ENCODE measurements at regions of chr12 and their contacts with region 1.

Region 1: DNA sequence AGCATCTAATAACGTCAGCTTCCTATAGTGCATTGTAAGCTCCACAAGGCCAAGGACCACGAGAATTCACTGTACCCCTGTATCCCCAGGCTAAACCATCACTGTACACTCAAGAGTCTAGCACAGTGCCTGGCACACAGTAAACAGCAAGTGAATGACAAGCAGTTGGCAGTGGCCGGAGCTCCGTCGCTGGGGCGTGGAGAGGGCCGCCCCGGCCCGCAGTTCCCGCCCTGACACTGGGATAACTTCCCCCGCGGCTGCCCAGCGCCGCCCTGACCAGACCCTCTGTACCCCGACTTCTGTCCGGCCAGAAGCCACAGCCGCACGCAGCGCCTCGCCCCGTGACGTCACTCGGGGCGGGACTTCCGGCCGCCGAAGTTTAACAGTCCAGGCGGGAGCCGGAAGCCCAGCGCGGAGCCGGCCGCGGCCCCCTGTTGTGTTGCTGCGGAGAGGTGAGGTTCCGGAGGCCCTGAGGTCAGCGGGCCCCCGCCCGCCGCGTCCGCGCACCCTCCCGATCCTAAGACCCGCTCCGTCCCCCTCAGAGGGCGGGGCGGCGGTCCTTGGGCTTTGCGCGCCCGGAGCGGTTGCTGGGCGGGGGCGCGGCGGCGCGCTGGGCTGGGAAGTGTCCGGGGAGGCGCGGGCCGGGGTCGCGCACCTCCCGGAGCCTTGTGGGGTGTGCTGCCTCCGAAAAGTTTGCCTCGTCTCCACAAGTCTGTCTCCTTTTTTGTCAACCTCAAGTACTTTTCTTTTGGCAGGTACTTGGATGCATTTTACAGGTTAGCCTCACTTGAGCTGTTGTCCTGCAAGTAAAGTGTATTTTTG is at the start of gene NEDD1:
- DNase-seq: peak; percentile 60 to 83
- H3K4me3 ChIP-seq: peak within 1 kb of the TSS; percentile 91
- H3K27ac ChIP-seq: peak within 1 kb of the TSS; percentile 7; the same call in 1 of the 2 replicates
- H3K4me1 ChIP-seq: peaks cover 12% of the 10 kb centered on the region
- H3K27me3 ChIP-seq: no peaks in the 10 kb centered on the region
- CTCF ChIP-seq: no peak
- total RNA-seq, gene NEDD1: 24.8 and 36.3 TPM in 2 replicates

Region 2: GRCh38 chr12:96143392-96143791 is 763.7 kb before region 1 on chr12:
- CTCF ChIA-PET with region 1: no interaction called
- POLR2A ChIA-PET with region 1: no interaction called
- intact Hi-C with region 1: no loop called
- DNase-seq: no peak
- H3K4me3 ChIP-seq: no peak overlapping the region
- H3K27ac ChIP-seq: no peak overlapping the region
- H3K4me1 ChIP-seq: no peaks in the 10 kb centered on the region
- H3K27me3 ChIP-seq: no peaks in the 10 kb centered on the region
- CTCF ChIP-seq: no peak

Region 3: DNA sequence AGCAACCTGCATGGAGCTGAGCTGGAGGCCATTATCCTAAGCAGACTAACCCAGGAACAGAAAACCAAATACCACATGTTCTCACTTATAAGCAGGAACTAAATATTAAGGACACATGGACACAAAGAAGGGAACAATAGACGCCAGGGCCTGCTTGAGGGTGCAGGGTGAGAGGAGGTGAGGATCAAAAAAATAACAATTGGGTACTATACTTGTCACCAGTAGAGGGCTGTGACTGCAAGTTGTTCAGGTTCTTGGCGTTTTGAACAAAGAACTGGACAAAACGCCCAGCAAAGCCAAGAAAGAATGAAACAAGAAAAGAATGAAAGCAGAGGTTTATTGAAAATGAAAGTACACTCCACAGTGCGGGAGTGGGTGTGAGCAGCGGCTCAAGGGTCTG is 208.5 kb before region 1 on chr12:
- CTCF ChIA-PET with region 1: no interaction called
- POLR2A ChIA-PET with region 1: no interaction called
- intact Hi-C with region 1: loop called (anchors 10 kb)
- DNase-seq: no peak
- H3K4me3 ChIP-seq: peak overlapping the region; percentile 51
- H3K27ac ChIP-seq: no peak overlapping the region
- H3K4me1 ChIP-seq: no peaks in the 10 kb centered on the region
- H3K27me3 ChIP-seq: no peaks in the 10 kb centered on the region
- CTCF ChIP-seq: peak; percentile 46; the same call in 1 of the 2 replicates

Region 4: GRCh38 chr12:96861656-96862055 is 45.4 kb before region 1 on chr12:
- CTCF ChIA-PET with region 1: no interaction called
- POLR2A ChIA-PET with region 1: no interaction called
- intact Hi-C with region 1: loop called (anchors 5 kb)
- DNase-seq: no peak
- H3K4me3 ChIP-seq: no peak overlapping the region
- H3K27ac ChIP-seq: no peak overlapping the region
- H3K4me1 ChIP-seq: no peaks in the 10 kb centered on the region; the same call in 1 of the 2 replicates
- H3K27me3 ChIP-seq: no peaks in the 10 kb centered on the region
- CTCF ChIP-seq: no peak